HepG2 (cell line): ENCODE measurements at regions of chr13 and their contacts with region 1.

Region 1: GRCh38 chr13:102555917-102556553 is 40.8 kb upstream of the TPP2 start:
- DNase-seq: peak; percentile 18
- ATAC-seq: peak; percentile 69
- H3K4me3 ChIP-seq: no peak overlapping the region
- H3K27ac ChIP-seq: no peak overlapping the region
- H3K4me1 ChIP-seq: no peaks in the 10 kb centered on the region
- H3K27me3 ChIP-seq: no peaks in the 10 kb centered on the region
- CTCF ChIP-seq: peak; percentile 63
- EP300 ChIP-seq: no peak
- POLR2A ChIP-seq: no peak
- RAD21 ChIP-seq: no peak; the same call in 1 of the 2 replicates

Region 2: GRCh38 chr13:101144808-101145419 is 1411.1 kb before region 1 on chr13:
- CTCF ChIA-PET with region 1: interaction called, 3 read pairs
- POLR2A ChIA-PET with region 1: no interaction called
- in situ Hi-C with region 1: no loop called
- intact Hi-C with region 1: loop called (anchors 10 kb)
- DNase-seq: peak; percentile 38
- ATAC-seq: peak; percentile 64; the same call in 2 of the 3 replicates
- H3K4me3 ChIP-seq: no peak overlapping the region
- H3K27ac ChIP-seq: no peak overlapping the region
- H3K4me1 ChIP-seq: no peaks in the 10 kb centered on the region
- H3K27me3 ChIP-seq: peaks cover 1 to 10% of the 10 kb centered on the region in 2 experiments; a peak in 2 of 5 replicates
- CTCF ChIP-seq: peak; percentile 60
- EP300 ChIP-seq: no peak
- POLR2A ChIP-seq: no peak
- RAD21 ChIP-seq: peak; percentile 33; the same call in 1 of the 2 replicates

Region 3: GRCh38 chr13:101785858-101786257 is 770.2 kb before region 1 on chr13:
- CTCF ChIA-PET with region 1: no interaction called
- POLR2A ChIA-PET with region 1: no interaction called
- in situ Hi-C with region 1: loop called (anchors 25 kb)
- intact Hi-C with region 1: no loop called
- DNase-seq: peak; percentile 17
- ATAC-seq: peak; percentile 94
- H3K4me3 ChIP-seq: no peak overlapping the region
- H3K27ac ChIP-seq: no peak overlapping the region
- H3K4me1 ChIP-seq: no peaks in the 10 kb centered on the region
- H3K27me3 ChIP-seq: no peaks in the 10 kb centered on the region; a peak in 2 of 5 replicates
- CTCF ChIP-seq: peak; percentile 51
- EP300 ChIP-seq: no peak
- POLR2A ChIP-seq: no peak
- RAD21 ChIP-seq: 0 out of 2 replicates have a peak, but pooled peaks have one; percentile 23

Region 4: DNA sequence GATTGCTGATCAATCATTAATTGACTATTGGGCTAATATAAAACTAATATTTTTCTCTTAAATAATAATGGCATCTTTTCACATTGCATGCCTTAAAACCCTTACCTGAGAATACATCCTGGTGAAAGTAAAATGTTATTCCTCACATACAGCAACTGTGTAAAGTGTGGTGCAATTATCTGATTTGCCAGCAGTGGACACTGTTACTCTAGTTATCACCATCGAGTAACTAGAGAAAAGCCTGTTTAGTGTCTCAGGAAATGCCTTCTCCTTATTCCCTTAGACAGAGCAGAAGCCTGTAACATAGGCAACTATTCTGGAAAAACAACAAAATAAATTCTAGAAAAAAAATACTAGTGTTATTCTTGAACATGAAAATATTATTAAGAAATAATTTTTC is 614.0 kb before region 1 on chr13:
- CTCF ChIA-PET with region 1: no interaction called
- POLR2A ChIA-PET with region 1: no interaction called
- in situ Hi-C with region 1: no loop called
- intact Hi-C with region 1: loop called (anchors 5 kb)
- DNase-seq: peak; percentile 7
- ATAC-seq: peak; percentile 73
- H3K4me3 ChIP-seq: no peak overlapping the region
- H3K27ac ChIP-seq: no peak overlapping the region
- H3K4me1 ChIP-seq: no peaks in the 10 kb centered on the region
- H3K27me3 ChIP-seq: no peaks in the 10 kb centered on the region
- CTCF ChIP-seq: peak; percentile 58
- EP300 ChIP-seq: no peak
- POLR2A ChIP-seq: no peak
- RAD21 ChIP-seq: peak; percentile 38; the same call in 1 of the 2 replicates

Region 5: DNA sequence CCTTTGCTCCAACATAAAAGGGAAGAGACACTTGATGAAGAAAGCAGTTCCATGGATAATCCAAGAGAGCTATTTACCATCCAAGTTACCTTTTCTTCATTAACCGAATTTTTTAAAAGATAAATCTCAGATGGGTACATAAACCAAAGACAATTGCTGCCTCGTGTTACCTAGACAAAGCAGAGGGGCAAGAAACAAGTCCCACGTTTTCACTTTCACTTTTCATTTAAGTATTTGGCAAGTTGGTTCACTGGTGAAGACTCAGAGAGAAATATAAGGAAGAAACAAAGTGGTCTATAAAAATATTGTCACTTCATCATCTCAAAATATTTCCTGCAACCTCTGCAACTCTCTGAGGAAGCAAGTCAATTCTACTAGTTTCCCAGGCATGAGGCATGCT is 600.3 kb before region 1 on chr13:
- CTCF ChIA-PET with region 1: no interaction called
- POLR2A ChIA-PET with region 1: no interaction called
- in situ Hi-C with region 1: loop called (anchors 25 kb)
- intact Hi-C with region 1: no loop called
- DNase-seq: no peak
- ATAC-seq: no peak
- H3K4me3 ChIP-seq: no peak overlapping the region
- H3K27ac ChIP-seq: no peak overlapping the region
- H3K4me1 ChIP-seq: no peaks in the 10 kb centered on the region
- H3K27me3 ChIP-seq: no peaks in the 10 kb centered on the region
- CTCF ChIP-seq: no peak
- EP300 ChIP-seq: no peak
- POLR2A ChIP-seq: no peak
- RAD21 ChIP-seq: no peak

Region 6: GRCh38 chr13:102141625-102142472 is 414.2 kb before region 1 on chr13:
- CTCF ChIA-PET with region 1: interaction called, 4 read pairs
- POLR2A ChIA-PET with region 1: no interaction called
- in situ Hi-C with region 1: loop called (anchors 25 kb)
- intact Hi-C with region 1: loop called (anchors 2 kb)
- DNase-seq: peak; percentile 4
- ATAC-seq: no peak
- H3K4me3 ChIP-seq: no peak overlapping the region
- H3K27ac ChIP-seq: no peak overlapping the region
- H3K4me1 ChIP-seq: no peaks in the 10 kb centered on the region
- H3K27me3 ChIP-seq: no peaks in the 10 kb centered on the region
- CTCF ChIP-seq: peak; percentile 53
- EP300 ChIP-seq: no peak
- POLR2A ChIP-seq: no peak
- RAD21 ChIP-seq: no peak

Region 7: GRCh38 chr13:102680842-102681740 is 125.1 kb after region 1 on chr13:
- CTCF ChIA-PET with region 1: no interaction called
- POLR2A ChIA-PET with region 1: no interaction called
- in situ Hi-C with region 1: no loop called
- intact Hi-C with region 1: no loop called
- DNase-seq: no peak
- ATAC-seq: peak; percentile 54
- H3K4me3 ChIP-seq: no peak overlapping the region
- H3K27ac ChIP-seq: no peak overlapping the region
- H3K4me1 ChIP-seq: no peaks in the 10 kb centered on the region
- H3K27me3 ChIP-seq: no peaks in the 10 kb centered on the region
- CTCF ChIP-seq: no peak
- EP300 ChIP-seq: no peak
- POLR2A ChIP-seq: no peak
- RAD21 ChIP-seq: no peak